ENCODE measurements at regions of chr2 and their contacts with region 1.

Region 1: GRCh38 chr2:213251618-213252017 is 32.6 kb upstream of the SPAG16 start:
- DNase-seq: no peak
- H3K4me3 ChIP-seq: no peak overlapping the region
- H3K27ac ChIP-seq: no peak overlapping the region
- H3K4me1 ChIP-seq: no peaks in the 10 kb centered on the region
- H3K27me3 ChIP-seq: no peaks in the 10 kb centered on the region
- CTCF ChIP-seq: peak; percentile 76

Region 2: GRCh38 chr2:213288913-213289700 is 37.5 kb after region 1 on chr2:
- intact Hi-C with region 1: no loop called
- DNase-seq: no peak
- H3K4me3 ChIP-seq: no peak overlapping the region
- H3K27ac ChIP-seq: no peak overlapping the region
- H3K4me1 ChIP-seq: no peaks in the 10 kb centered on the region
- H3K27me3 ChIP-seq: no peaks in the 10 kb centered on the region
- CTCF ChIP-seq: no peak

Region 3: GRCh38 chr2:213934560-213934959 is 682.9 kb after region 1 on chr2:
- intact Hi-C with region 1: loop called (anchors 5 kb)
- DNase-seq: peak; percentile 18
- H3K4me3 ChIP-seq: no peak overlapping the region
- H3K27ac ChIP-seq: no peak overlapping the region
- H3K4me1 ChIP-seq: no peaks in the 10 kb centered on the region
- H3K27me3 ChIP-seq: no peaks in the 10 kb centered on the region
- CTCF ChIP-seq: peak; percentile 19